Activated CD4-positive, alpha-beta T cell treated with anti-CD3 and anti-CD28 coated beads for 36 hours (primary cell): ENCODE measurements at regions of chr5 and their contacts with region 1.

Region 1: DNA sequence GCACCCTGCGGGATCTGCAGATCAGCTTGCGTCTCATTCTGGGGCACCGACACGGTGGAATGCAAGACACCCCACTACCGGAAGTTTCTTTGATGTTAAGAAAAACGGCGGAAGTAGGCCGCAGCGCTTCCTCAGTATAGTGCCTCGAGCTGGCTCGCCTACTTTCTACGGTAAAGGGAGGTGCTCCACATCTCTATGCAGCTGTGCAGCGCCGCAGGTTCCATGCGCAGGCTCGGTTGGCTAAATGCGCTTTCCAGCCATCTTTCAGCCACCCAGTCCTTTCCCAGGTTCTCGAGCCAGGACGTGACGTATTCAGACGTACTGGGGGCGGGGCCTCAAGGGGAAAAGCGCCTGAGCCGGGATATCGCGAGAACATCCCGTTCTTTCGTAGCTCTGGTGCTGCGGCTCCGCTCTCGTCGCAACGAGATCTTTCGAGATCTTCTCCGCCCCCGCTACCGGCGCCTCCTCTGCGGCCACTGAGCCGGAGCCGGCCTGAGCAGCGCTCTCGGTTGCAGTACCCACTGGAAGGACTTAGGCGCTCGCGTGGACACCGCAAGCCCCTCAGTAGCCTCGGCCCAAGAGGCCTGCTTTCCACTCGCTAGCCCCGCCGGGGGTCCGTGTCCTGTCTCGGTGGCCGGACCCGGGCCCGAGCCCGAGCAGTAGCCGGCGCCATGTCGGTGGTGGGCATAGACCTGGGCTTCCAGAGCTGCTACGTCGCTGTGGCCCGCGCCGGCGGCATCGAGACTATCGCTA is at the start of gene HSPA4:
- DNase-seq: peak; percentile 99
- ATAC-seq: peak; percentile 89
- H3K4me3 Mint-ChIP-seq: peak within 1 kb of the TSS; percentile 98
- H3K27ac Mint-ChIP-seq: peak within 1 kb of the TSS; percentile 100
- H3K4me1 Mint-ChIP-seq: peaks cover 44% of the 10 kb centered on the region
- H3K27me3 Mint-ChIP-seq: no peaks in the 10 kb centered on the region
- total RNA-seq, gene HSPA4: 243 to 268 TPM

Region 2: DNA sequence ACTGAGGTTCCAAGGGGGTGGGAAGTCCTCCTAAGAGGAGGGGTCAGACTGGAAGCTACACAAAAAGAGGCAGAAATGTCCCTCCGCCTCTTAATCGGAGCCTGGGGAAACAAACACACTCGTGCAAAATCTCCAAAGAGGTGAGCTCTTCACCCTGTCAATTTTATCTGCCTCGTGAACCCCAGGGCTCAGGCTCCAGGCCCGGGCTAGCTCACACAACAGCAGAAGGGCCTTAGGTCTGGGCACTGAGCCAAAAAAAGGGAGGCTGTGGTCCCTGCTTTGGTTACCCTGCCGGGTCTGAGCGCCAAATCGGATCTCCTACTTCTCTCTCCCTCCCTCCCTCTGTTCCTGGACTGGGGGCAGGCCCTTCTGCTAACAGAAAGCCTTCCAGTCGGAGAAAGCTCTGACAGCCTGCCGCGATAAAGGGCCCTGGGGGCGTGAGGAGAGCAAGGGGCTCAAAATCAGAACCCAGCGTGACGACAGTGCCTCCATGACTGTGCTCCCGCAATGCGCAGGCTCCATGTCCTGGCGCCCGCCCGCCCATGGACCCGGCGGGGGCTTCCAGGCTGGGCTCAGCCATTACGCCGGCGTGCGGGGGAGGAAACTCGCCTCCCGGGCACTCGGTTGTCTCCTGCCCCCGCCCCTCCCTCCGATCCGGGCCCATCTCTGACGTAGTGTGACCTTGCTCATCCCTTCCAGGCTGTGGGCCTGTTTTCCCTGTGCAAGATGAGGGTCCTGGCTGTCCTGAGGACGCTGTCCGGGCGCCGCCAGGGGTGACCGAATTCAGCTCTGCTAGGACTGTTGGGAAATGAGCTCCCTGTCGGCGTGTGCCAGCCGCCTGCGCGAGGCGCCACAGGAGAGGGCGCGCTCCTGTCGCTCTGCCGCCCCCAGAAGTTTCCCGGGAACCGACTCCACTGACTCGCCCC is 758.4 kb before region 1 on chr5:
- CTCF ChIA-PET with region 1: no interaction called
- POLR2A ChIA-PET with region 1: no interaction called
- intact Hi-C with region 1: loop called in 1 of 2 experiments (anchors 5 kb)
- DNase-seq: peak; percentile 89
- ATAC-seq: peak; percentile 45
- H3K4me3 Mint-ChIP-seq: peak overlapping the region; percentile 88
- H3K27ac Mint-ChIP-seq: peak overlapping the region; percentile 94
- H3K4me1 Mint-ChIP-seq: peaks cover 22% of the 10 kb centered on the region
- H3K27me3 Mint-ChIP-seq: peaks cover 10% of the 10 kb centered on the region

Region 3: GRCh38 chr5:132495667-132496190 is 556.0 kb before region 1 on chr5:
- CTCF ChIA-PET with region 1: no interaction called
- POLR2A ChIA-PET with region 1: no interaction called
- intact Hi-C with region 1: loop called in 1 of 2 experiments (anchors 2 kb)
- DNase-seq: peak; percentile 92
- ATAC-seq: peak; percentile 49
- H3K4me3 Mint-ChIP-seq: peak overlapping the region; percentile 87
- H3K27ac Mint-ChIP-seq: peak overlapping the region; percentile 95
- H3K4me1 Mint-ChIP-seq: peaks cover 61% of the 10 kb centered on the region
- H3K27me3 Mint-ChIP-seq: no peaks in the 10 kb centered on the region

Region 4: GRCh38 chr5:132526290-132526973 is 525.3 kb before region 1 on chr5:
- CTCF ChIA-PET with region 1: no interaction called
- POLR2A ChIA-PET with region 1: no interaction called
- intact Hi-C with region 1: no loop called
- DNase-seq: peak; percentile 60
- ATAC-seq: peak; percentile 34
- H3K4me3 Mint-ChIP-seq: no peak overlapping the region
- H3K27ac Mint-ChIP-seq: no peak overlapping the region
- H3K4me1 Mint-ChIP-seq: peaks cover 39% of the 10 kb centered on the region
- H3K27me3 Mint-ChIP-seq: peaks cover 3% of the 10 kb centered on the region

Region 5: DNA sequence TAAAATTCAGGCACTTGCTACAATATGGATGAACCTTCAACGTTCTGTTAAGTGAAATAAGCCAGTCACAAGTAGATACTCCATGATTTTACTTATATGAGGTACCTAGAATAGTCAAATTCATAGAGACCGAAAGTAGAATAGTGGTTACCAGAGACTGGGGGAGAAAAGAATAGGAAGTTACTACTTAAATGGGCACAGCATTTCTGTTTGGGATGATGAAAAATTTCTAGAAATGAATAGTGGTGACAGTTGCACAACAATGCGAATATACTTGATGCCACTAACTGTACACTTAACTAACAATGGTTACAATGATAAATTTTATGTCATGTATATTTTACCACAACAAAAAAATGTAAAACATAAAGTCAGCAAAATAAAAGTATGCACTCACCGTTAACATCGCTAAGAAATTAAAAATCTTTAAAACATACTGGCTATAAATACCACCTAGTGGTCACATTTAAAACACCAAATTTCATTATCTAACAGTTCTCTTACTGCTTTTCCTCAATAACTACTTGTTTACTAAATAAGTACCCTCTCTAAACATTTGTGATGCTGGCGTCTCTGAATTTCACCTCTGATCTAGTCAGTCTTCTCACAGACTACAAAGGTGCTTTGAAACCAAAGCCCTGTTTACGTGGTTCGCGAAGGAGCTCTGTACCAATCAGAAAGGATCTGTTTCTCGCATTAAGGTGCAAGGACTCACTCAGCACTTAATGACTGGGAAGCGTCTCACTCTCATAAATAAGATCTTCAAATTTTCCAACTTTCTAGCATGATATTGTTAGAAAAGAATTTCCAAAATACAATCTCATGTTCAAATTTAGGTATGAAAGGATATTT is 337.1 kb before region 1 on chr5:
- CTCF ChIA-PET with region 1: no interaction called
- POLR2A ChIA-PET with region 1: no interaction called
- intact Hi-C with region 1: no loop called
- DNase-seq: no peak
- ATAC-seq: peak; percentile 86
- H3K4me3 Mint-ChIP-seq: peak overlapping the region; percentile 41
- H3K27ac Mint-ChIP-seq: no peak overlapping the region
- H3K4me1 Mint-ChIP-seq: peaks cover 11% of the 10 kb centered on the region
- H3K27me3 Mint-ChIP-seq: no peaks in the 10 kb centered on the region

Region 6: GRCh38 chr5:132736853-132737833 is 314.6 kb before region 1 on chr5 and contains the start of gene KIF3A:
- CTCF ChIA-PET with region 1: no interaction called
- POLR2A ChIA-PET with region 1: no interaction called
- intact Hi-C with region 1: loop called (anchors 1 to 2 kb)
- DNase-seq: peak; percentile 99
- ATAC-seq: peak; percentile 94
- H3K4me3 Mint-ChIP-seq: peak within 1 kb of the TSS; percentile 77
- H3K27ac Mint-ChIP-seq: peak within 1 kb of the TSS; percentile 70
- H3K4me1 Mint-ChIP-seq: peaks cover 30% of the 10 kb centered on the region
- H3K27me3 Mint-ChIP-seq: no peaks in the 10 kb centered on the region
- total RNA-seq, gene KIF3A: 7.1 to 10.6 TPM

Region 7: GRCh38 chr5:132963175-132964104 is 88.3 kb before region 1 on chr5 and contains the start of gene AFF4:
- CTCF ChIA-PET with region 1: interaction called, 3 read pairs
- POLR2A ChIA-PET with region 1: interaction called, 4 read pairs
- intact Hi-C with region 1: loop called (anchors 1 kb)
- DNase-seq: peak; percentile 94
- ATAC-seq: peak; percentile 92
- H3K4me3 Mint-ChIP-seq: peak within 1 kb of the TSS; percentile 96
- H3K27ac Mint-ChIP-seq: peak within 1 kb of the TSS; percentile 99
- H3K4me1 Mint-ChIP-seq: peaks cover 32% of the 10 kb centered on the region
- H3K27me3 Mint-ChIP-seq: no peaks in the 10 kb centered on the region
- total RNA-seq, gene AFF4: 20.9 to 29.3 TPM

Region 8: GRCh38 chr5:133081703-133082102 is 29.9 kb after region 1 on chr5:
- CTCF ChIA-PET with region 1: no interaction called
- POLR2A ChIA-PET with region 1: no interaction called
- intact Hi-C with region 1: no loop called
- DNase-seq: no peak
- ATAC-seq: no peak
- H3K4me3 Mint-ChIP-seq: no peak overlapping the region
- H3K27ac Mint-ChIP-seq: peak overlapping the region; percentile 74
- H3K4me1 Mint-ChIP-seq: peaks cover 23% of the 10 kb centered on the region
- H3K27me3 Mint-ChIP-seq: no peaks in the 10 kb centered on the region

Region 9: GRCh38 chr5:133968049-133968980 is 916.6 kb after region 1 on chr5 and contains the start of gene C5orf15:
- CTCF ChIA-PET with region 1: no interaction called
- POLR2A ChIA-PET with region 1: no interaction called
- intact Hi-C with region 1: loop called in 1 of 2 experiments (anchors 1 kb)
- DNase-seq: peak; percentile 97
- ATAC-seq: peak; percentile 97
- H3K4me3 Mint-ChIP-seq: peak within 1 kb of the TSS; percentile 94
- H3K27ac Mint-ChIP-seq: peak within 1 kb of the TSS; percentile 90
- H3K4me1 Mint-ChIP-seq: peaks cover 51% of the 10 kb centered on the region
- H3K27me3 Mint-ChIP-seq: no peaks in the 10 kb centered on the region
- total RNA-seq, gene C5orf15: 28.7 to 38.7 TPM

Region 10: DNA sequence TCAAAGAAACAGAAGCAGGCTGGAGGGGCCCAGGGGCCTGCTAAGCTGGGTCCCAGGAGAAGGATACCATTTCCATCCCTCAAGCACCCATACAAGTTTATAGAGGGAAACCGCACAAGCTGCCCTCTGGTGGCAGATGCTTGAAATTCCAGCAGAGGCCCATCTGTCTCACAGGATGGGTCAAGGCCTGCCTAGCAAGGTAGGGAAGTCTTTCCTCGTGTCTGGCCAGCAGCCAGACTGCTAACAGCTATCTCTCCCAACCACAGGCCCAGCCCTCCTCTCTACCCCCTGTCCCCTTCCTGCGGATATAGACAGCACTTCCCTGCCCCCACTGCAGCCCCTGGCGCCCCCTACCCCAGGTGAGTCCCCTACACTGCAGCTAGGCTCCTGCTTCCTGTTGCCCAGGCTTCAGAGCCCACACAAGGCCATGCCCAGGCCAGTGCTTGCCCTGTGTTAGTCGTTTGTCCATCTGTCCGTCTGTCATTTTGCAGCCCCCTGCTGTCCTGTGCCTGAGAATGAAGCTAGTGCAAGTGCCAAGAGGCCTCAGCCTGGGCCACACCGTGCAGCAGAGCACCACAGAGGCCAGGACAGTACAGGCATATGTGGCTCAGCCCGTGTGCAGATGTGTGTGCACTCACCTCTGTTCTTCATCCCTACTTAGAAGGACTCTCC is 1088.9 kb after region 1 on chr5:
- CTCF ChIA-PET with region 1: no interaction called
- POLR2A ChIA-PET with region 1: no interaction called
- intact Hi-C with region 1: loop called in 1 of 2 experiments (anchors 10 kb)
- DNase-seq: peak; percentile 82
- ATAC-seq: peak; percentile 42
- H3K4me3 Mint-ChIP-seq: no peak overlapping the region
- H3K27ac Mint-ChIP-seq: no peak overlapping the region
- H3K4me1 Mint-ChIP-seq: peaks cover 69% of the 10 kb centered on the region
- H3K27me3 Mint-ChIP-seq: no peaks in the 10 kb centered on the region